Dendritic cell treated with granulocyte-macrophage colony-stimulating factor and Interleukin-4, amounts not matched to agents 40 ng/mL and 50 ng/mL, for 4 days (primary cell): ENCODE measurements at regions of chr12 and their contacts with region 1.

Region 1: DNA sequence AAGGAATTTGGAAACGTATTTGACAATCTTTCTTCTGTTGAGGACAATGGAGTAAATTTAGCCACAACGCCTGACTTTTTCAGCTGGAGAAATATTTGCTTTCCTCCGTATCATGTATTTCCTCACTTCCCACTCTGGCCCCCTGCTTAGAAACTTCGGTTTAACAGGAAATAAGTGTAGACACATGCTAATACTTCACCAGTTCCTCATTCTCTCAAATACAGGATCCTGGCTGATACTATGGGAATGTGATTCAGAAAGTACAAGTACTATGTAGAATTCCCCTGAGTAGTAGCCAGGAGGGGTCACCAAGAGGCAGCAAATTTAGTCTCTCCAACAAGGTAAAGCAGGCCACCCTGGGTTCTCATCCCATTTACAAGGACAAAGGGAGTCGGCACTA is 58.0 kb downstream of the FAR2 start:
- H3K4me3 Mint-ChIP-seq: peak overlapping the region; percentile 11
- H3K27ac Mint-ChIP-seq: peak overlapping the region; percentile 48
- H3K4me1 Mint-ChIP-seq: peaks cover 51% of the 10 kb centered on the region
- H3K27me3 Mint-ChIP-seq: peaks cover 18% of the 10 kb centered on the region

Region 2: DNA sequence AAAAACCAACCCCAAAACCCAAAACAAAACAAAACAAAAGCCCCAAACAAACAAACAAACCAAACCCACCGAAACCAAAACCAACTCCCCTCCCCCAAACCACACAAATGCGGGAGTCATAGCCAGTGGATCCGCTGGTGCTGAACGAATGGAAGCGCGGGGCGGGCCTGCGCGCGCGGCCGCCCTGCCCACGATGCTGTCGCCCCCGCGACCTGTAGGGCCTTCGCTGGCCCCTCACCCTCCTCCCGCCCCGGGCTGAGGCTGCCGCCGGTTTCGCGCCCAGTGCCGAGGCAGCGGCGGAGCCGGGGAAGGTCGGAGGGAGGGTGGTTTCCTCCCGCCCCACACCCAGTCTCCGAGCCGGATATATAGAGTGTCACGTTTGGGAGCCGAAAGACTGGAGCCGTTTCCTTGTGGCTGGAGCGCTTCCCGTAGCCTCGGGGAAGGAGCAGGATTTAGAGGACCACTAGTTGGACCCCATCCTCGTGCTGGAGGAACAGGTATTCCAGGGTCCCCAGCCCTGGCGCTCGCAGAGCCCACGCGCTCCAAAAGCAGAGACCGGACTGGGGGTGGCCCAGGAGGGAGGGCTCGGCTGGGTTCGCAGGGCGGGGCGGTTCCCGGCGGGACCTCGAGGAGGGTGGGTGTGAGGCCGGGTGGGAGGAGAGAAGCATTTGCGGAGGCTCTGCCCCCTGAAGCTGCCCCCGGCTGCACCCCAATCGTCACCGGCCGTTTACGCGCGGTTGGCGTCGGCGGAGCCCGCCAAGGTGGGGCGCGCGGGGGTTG is 58.0 kb before region 1 on chr12 and contains the start of gene FAR2:
- intact Hi-C with region 1: loop called (anchors 5 kb)
- H3K4me3 Mint-ChIP-seq: peak within 1 kb of the TSS; percentile 82
- H3K27ac Mint-ChIP-seq: peak within 1 kb of the TSS; percentile 78
- H3K4me1 Mint-ChIP-seq: peaks cover 48% of the 10 kb centered on the region
- H3K27me3 Mint-ChIP-seq: peaks cover 79% of the 10 kb centered on the region

Region 3: GRCh38 chr12:29176941-29177340 is 30.2 kb before region 1 on chr12:
- intact Hi-C with region 1: no loop called
- H3K4me3 Mint-ChIP-seq: no peak overlapping the region
- H3K27ac Mint-ChIP-seq: no peak overlapping the region
- H3K4me1 Mint-ChIP-seq: peaks cover 7% of the 10 kb centered on the region
- H3K27me3 Mint-ChIP-seq: peaks cover 74% of the 10 kb centered on the region

Region 4: DNA sequence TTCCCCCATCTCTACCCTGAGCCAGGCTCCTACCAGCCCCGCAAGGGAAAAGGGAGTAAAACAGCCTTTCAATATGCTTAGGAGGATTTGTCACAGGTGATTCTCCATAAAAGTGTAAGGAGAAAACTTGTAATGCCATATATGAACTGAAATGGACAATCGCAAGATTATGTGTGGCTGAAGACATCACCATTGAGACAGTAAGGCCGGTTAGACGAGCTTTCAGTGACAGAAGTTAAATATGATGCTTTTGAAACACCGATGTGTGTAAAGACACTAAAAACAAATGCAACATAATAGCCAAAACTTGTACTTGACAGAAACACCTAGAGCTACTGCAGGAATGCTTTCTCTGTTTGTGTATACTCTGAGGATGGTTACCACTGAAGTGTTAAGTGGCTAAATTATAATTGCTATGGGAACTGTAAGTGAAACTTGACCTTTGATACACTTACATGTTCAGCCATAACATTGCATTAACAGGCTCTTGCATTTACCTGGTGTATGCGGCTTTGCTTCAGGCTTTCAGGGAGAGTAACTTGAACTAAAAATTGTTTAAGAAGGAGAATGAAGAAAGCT is 15.8 kb before region 1 on chr12:
- intact Hi-C with region 1: no loop called
- H3K4me3 Mint-ChIP-seq: no peak overlapping the region
- H3K27ac Mint-ChIP-seq: no peak overlapping the region
- H3K4me1 Mint-ChIP-seq: peaks cover 8% of the 10 kb centered on the region
- H3K27me3 Mint-ChIP-seq: peaks cover 38% of the 10 kb centered on the region

Region 5: GRCh38 chr12:29241821-29242591 is 34.9 kb after region 1 on chr12:
- intact Hi-C with region 1: loop called (anchors 2 kb)
- H3K4me3 Mint-ChIP-seq: peak overlapping the region; percentile 6
- H3K27ac Mint-ChIP-seq: peak overlapping the region; percentile 86
- H3K4me1 Mint-ChIP-seq: peaks cover 65% of the 10 kb centered on the region
- H3K27me3 Mint-ChIP-seq: peaks cover 21% of the 10 kb centered on the region